Activated T-helper 1 cell treated with anti-CD3 and anti-CD28 coated beads, Interleukin-12 subunit alpha, Interleukin-12 subunit beta, Interleukin-2, Interleukin-4 antibody, amounts not matched to agents 30 ng/mL and 10 ng/mL and 1 ng/mL, durations not matched to agents 14 hours and 24 hours and 36 hours (primary cell): ENCODE measurements at regions of chr9 and their contacts with region 1.

Region 1: GRCh38 chr9:96150324-96151227 is 151.4 kb downstream of the HSD17B3 start:
- DNase-seq: peak; percentile 42
- H3K4me3 Mint-ChIP-seq: peak overlapping the region; percentile 47
- H3K27ac Mint-ChIP-seq: peak overlapping the region; percentile 65
- H3K4me1 Mint-ChIP-seq: peaks cover 38% of the 10 kb centered on the region
- H3K27me3 Mint-ChIP-seq: peaks cover 15% of the 10 kb centered on the region

Region 2: DNA sequence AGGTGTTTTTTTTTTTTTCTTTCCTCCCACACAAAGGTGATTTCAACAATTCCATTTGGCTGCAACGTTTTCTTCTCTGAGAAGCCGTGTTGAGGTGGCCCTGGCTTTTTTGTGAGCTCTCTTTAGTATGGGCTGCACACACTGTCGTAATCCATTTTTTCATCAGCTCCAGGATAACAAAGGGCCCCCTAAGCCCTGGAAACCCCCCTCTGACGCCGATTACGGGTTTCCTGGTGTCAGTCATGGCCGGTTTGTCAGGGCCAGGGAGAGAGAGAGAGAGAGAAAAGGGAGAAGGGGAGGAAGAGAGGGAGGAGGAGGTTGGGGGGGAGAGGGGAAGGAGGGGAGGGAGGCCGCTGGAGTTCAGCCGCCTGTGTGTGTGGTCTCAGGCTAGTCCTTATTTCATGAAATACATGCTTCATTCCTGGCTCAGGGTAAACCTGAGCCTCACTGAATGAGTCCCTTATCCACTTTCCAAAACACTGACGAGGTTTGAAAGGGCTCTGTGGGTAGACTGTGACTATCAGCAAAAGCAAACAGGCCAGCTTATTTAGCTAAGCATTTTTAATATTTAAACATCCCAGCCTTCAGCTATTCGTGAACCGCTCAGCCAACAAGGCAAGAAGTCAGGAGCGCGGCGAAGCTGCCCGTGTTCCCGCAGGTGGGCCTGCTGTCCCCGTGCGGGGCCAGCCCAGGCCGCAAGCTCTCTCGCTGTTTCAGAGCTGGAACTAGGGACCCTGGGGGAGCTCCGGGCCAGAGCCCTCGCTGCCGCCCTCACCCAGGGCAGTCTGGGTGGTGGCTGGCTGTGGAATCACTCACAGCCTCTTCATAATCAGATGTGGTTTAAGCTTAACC is 102.2 kb before region 1 on chr9:
- intact Hi-C with region 1: loop called (anchors 1 kb)
- DNase-seq: no peak
- H3K4me3 Mint-ChIP-seq: peak overlapping the region; percentile 5
- H3K27ac Mint-ChIP-seq: peak overlapping the region; percentile 86
- H3K4me1 Mint-ChIP-seq: peaks cover 8% of the 10 kb centered on the region
- H3K27me3 Mint-ChIP-seq: peaks cover 11% of the 10 kb centered on the region

Region 3: DNA sequence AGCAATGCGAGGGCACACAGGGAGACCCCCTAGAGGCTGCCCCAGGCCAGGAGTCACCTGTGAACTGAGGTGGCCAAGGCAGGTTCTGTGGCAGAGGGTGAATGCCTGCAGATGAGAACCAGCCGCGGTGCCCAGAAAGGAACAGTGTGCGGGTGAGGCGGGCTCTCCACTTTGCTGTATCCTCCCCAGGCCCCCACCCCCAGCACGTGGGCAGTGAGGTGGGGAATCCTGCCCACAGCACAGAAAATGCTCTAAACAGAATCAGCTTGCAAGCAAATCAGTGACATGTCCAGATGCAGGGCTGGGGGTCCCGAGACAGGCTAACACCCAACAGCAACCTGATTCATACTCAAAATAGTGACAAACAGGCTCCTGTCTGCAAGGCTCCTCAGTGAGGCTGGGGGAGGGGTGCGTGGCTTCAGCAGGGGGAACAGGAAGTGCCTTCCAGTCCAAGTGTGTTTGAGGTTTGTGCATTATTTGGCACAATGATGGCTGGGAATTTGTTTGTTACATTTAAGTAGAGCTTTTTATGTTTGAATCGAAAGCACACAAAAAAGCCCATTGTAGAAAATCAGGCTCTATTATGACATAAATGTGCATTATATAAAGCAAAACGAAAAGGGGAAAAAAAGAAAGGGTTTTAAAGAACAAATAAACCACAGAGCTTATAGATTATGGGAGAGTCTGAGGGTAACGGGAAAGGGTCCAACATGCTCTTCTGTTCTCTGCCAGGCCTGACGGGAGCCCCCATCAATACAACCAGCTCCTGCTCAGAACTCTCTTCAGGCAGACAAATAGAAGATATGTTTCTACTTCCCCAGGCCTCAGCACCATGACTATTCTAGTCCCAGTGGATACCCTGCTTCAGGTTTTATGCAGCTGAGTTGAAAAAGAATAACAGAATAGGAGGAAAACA is 49.9 kb before region 1 on chr9:
- intact Hi-C with region 1: no loop called
- DNase-seq: no peak
- H3K4me3 Mint-ChIP-seq: no peak overlapping the region
- H3K27ac Mint-ChIP-seq: no peak overlapping the region
- H3K4me1 Mint-ChIP-seq: peaks cover 8% of the 10 kb centered on the region
- H3K27me3 Mint-ChIP-seq: peaks cover under 1% of the 10 kb centered on the region

Region 4: GRCh38 chr9:96241391-96241809 is 90.8 kb after region 1 on chr9:
- intact Hi-C with region 1: loop called (anchors 1 kb)
- DNase-seq: peak; percentile 53
- H3K4me3 Mint-ChIP-seq: peak overlapping the region; percentile 7
- H3K27ac Mint-ChIP-seq: peak overlapping the region; percentile 88
- H3K4me1 Mint-ChIP-seq: peaks cover 16% of the 10 kb centered on the region
- H3K27me3 Mint-ChIP-seq: peaks cover 69% of the 10 kb centered on the region